Right ventricle myocardium inferior (tissue), 1 donor: ENCODE measurements at regions of chr5 and their contacts with region 1.

Region 1: GRCh38 chr5:36305571-36306326 is 4.0 kb upstream of the RANBP3L start:
- DNase-seq: peak; percentile 71
- ATAC-seq: peak; percentile 81

Region 2: DNA sequence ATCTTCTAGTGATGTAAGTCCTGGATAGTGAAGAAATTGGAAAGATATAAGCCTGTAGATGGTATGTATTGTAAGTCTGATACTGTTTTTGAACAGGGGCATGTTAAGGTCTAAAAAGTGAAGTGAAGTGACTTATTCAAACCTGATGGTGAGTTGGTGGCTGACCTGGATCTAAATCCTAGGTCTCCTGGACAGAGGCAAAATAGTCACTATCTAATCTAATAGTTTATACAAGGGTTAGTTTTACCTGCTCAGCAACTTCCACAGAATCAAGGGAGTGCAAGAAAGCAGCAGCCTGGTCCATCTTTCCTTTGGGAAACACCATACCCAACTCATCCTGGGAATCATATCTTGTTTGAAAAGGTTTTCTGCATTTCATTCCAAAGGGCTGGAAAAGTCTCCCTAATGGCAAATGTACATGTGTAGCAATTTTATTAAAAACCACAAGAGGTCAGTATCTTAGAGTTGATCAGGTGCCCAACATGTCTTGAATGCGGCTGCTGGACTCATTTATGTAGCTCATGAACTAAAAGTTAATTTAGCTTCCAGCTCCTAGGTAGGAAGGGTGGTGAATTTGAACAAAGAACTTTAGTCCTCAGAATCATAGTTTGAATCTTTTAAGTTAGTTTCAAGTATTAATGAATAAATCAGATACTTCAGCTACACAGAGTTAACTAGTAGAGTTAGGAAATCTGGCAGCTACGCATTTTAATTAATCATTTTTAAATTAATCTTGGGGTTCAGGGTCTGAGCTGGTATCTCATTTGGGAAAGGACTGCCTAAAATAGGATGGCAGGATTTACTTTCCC is 127.8 kb before region 1 on chr5:
- intact Hi-C with region 1: loop called (anchors 5 kb)
- DNase-seq: no peak
- ATAC-seq: no peak

Region 3: GRCh38 chr5:36241631-36242533 is 63.9 kb before region 1 on chr5 and contains the start of gene NADK2:
- intact Hi-C with region 1: loop called (anchors 10 kb)
- DNase-seq: peak; percentile 97
- ATAC-seq: peak; percentile 95
- total RNA-seq, gene NADK2: 39.4 TPM

Region 4: DNA sequence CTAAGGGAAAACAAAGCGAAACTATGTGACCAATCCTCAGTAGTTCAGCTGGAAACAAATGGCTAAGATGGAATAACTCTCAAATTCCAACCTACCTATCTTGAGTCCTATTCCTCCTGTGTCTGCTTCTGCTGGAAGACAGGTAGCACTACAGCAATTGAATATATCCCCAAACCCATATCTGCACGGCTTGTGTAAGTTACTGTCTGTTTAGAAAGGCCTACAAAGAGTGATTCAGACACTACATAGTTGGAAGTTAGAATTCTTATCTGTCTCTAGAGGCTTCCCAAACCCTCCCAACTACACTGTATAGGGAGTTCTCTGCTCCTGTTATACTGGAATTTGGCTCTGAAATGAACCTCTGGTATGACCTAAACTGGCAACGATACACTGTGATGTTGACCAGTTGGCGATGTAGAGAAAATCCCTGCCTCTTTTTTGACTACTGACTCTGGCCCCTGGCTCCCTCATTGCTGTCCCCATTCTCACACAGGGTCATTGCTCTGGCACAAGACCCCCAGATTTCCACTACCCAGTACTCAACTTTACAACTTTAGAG is 41.5 kb before region 1 on chr5:
- intact Hi-C with region 1: loop called (anchors 2 kb)
- DNase-seq: no peak
- ATAC-seq: no peak

Region 5: GRCh38 chr5:36590513-36591286 is 285.0 kb after region 1 on chr5:
- intact Hi-C with region 1: no loop called
- DNase-seq: no peak
- ATAC-seq: peak; percentile 80